ENCODE measurements at regions of chr16 and their contacts with region 1.

Region 1: DNA sequence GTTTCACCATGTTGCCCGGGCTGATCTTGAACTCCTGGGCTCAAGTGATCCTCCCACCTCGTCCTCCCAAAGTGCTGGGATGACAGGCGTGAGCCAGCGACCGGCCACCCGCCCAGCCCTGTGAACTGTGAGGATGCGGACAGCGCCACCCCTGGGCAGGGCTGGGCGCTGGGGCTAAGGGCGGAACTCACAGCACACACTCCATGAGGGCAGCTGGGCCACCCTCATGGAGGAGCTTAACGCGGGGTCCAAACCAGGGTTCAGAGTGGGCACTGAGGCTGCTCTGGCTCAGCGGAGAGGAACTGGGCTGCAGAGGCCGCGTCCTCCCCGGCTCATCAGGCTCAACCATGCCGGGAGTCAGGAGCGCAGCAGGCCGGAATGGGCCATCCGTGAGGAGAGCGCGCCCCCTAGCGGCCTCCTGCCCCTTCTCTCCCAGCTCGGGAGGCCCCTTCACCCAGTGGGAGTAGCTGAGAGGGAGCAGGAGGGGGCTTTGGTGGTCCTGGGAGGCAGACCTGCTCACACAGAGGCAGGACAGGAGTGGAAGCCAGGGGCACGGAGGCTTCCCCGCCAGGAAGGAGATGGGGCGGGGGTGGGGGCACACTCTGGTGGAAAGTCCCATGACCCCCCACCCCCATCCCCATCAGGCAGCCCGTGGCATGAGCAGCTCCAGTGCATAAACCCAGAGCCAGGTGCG is 13.8 kb downstream of the CORO7 start:
- DNase-seq: no peak
- H3K4me3 ChIP-seq: peak overlapping the region; percentile 15
- CTCF ChIP-seq: peak; percentile 90

Region 2: GRCh38 chr16:4038448-4038847 is 364.1 kb before region 1 on chr16:
- CTCF ChIA-PET with region 1: no interaction called
- POLR2A ChIA-PET with region 1: no interaction called
- DNase-seq: no peak
- H3K4me3 ChIP-seq: no peak overlapping the region
- CTCF ChIP-seq: no peak

Region 3: GRCh38 chr16:4253394-4254150 is 149.0 kb before region 1 on chr16:
- CTCF ChIA-PET with region 1: interaction called, 21 read pairs
- POLR2A ChIA-PET with region 1: no interaction called
- DNase-seq: peak; percentile 93
- H3K4me3 ChIP-seq: peak overlapping the region; percentile 66
- CTCF ChIP-seq: no peak

Region 4: GRCh38 chr16:4288148-4288921 is 114.3 kb before region 1 on chr16:
- CTCF ChIA-PET with region 1: interaction called, 24 read pairs
- POLR2A ChIA-PET with region 1: no interaction called
- DNase-seq: no peak
- H3K4me3 ChIP-seq: no peak overlapping the region
- CTCF ChIP-seq: peak; percentile 95

Region 5: GRCh38 chr16:4330277-4330874 is 72.2 kb before region 1 on chr16:
- CTCF ChIA-PET with region 1: interaction called, 94 read pairs
- POLR2A ChIA-PET with region 1: no interaction called
- DNase-seq: no peak
- H3K4me3 ChIP-seq: no peak overlapping the region
- CTCF ChIP-seq: peak; percentile 96

Region 6: GRCh38 chr16:4358831-4359561 is 43.6 kb before region 1 on chr16:
- CTCF ChIA-PET with region 1: interaction called, 317 read pairs
- POLR2A ChIA-PET with region 1: no interaction called
- DNase-seq: no peak
- H3K4me3 ChIP-seq: no peak overlapping the region
- CTCF ChIP-seq: peak; percentile 95

Region 7: DNA sequence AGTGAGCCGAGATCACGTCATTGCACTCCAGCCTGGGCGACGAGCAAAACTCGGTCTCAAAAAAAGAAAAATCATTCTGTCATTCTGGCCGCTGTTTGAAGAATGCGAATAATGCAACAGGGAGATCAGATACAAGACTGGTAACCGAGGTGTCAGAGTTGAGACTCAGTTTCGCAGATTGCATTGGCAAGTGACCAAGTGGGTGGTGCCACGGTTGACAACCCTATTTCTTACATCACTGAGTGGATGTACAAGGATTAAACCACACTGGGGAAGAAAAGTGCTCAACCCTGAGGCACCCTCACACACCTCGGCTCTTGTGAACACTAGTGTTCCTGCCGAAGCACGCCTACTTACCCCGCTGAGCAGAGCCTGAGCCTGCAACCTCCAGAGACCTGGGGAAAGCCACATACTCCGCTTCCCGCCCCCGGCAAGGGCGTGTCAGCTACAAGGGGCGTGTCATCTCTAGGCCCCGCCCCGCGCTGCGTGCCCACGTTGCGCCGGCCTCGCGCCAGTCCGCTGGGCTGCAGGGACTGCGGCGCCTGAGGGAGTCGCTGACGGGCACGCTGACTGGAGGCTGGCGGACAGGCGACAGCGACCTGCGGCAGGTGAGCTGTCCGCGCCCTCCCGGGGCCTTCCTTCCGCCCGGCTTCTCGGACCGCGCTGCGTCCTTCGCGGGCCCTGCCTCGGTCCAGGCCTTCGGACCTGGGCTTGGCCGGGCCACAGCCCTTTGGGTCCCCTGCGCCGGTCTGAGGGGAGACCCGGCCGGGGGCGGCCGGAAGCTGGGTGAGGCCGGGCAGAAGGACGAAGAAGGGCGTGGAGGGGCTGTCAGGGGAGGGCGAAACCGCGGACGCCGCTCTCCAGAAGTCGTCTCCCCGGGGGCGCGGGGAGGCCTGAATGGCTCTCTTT is 73.5 kb after region 1 on chr16 and contains the start of gene HMOX2:
- CTCF ChIA-PET with region 1: no interaction called
- POLR2A ChIA-PET with region 1: no interaction called
- DNase-seq: no peak
- H3K4me3 ChIP-seq: peak within 1 kb of the TSS; percentile 89
- CTCF ChIP-seq: peak; percentile 74

Region 8: DNA sequence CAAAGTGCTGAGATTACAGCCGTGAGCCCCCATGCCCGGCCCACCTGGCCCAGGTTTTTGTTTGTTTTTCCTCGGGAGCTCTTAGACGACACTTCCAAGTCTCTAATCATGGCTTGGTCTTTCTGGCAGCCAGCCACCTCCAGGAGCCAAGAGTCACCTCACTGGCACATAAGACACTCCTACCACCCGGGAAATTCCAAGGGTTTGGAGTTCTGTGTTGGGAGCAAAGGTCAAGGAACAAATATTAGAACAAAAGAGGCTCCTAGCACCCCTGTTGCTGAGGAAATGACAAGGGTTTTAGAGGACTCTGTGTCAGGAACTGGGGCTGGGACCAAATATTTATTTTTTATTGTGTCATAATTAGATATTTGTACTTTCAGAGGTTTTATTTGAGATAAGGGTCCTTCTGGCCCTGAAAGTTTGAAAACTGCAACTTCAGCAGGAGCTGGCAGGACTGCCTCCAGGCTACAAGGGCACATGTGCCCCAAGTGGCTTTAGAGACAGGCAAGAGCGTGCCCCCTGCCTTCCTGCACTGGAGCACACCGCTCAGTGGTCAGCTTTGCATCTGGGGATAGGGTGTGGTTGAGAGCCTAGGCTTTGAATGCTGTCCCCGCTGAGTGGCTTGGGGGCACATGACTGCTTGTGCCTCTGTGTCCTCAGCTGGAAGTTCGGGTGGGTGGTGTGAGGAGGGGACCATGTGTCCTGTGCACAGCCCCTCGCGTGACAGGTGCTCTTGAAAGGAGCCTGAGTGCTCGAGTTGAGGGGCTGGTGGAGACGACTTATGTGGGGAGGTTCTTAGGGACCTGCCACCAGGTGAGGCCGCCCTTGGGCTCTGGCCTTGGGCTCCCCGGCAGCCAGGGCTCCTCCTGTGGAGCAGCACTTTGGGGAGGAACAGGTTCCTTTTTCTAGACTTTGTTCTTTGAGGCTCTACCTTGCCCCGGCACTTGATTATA is 251.7 kb after region 1 on chr16:
- CTCF ChIA-PET with region 1: no interaction called
- POLR2A ChIA-PET with region 1: no interaction called
- DNase-seq: no peak
- H3K4me3 ChIP-seq: no peak overlapping the region
- CTCF ChIP-seq: no peak

Measured in AG04449 (cell line).